ENCODE measurements at regions of chr4 and their contacts with region 1.

Region 1: DNA sequence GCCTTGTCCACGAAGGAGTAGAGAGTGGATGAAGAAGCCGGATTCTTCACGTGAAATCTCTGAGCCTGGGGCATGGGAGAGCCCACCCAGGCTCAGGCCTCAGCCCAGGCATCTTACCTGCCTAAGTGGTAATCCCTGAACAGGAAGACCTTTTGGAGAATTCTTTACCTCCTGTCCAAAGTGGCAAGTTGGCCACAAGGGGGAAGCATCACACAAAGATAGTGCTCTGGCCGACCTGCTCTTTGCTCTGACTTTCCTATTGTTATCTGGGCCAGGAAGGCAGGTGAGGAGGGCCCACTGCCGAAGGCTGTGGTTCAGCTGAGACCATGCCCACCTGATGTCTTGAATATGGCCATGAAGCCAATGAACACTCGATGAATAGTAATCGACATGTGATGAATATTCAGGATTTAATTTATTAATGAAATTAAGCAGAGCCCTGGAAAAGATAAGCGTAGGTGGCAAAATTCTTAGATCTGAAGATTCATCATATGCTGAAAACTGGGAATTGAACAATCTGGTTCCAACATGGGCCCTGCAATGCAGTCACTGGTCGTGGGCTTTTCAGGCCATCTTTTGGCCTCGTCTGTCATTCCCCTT is 93.8 kb downstream of the PDGFRA start:
- DNase-seq: peak; percentile 35 to 59
- ATAC-seq: peak; percentile 72 to 80 (median 75)
- H3K4me3 ChIP-seq: no peak overlapping the region
- H3K27ac ChIP-seq: no peak overlapping the region
- H3K4me1 ChIP-seq: no peaks in the 10 kb centered on the region
- H3K27me3 ChIP-seq: no peaks in the 10 kb centered on the region
- CTCF ChIP-seq: peak; percentile 75

Region 2: DNA sequence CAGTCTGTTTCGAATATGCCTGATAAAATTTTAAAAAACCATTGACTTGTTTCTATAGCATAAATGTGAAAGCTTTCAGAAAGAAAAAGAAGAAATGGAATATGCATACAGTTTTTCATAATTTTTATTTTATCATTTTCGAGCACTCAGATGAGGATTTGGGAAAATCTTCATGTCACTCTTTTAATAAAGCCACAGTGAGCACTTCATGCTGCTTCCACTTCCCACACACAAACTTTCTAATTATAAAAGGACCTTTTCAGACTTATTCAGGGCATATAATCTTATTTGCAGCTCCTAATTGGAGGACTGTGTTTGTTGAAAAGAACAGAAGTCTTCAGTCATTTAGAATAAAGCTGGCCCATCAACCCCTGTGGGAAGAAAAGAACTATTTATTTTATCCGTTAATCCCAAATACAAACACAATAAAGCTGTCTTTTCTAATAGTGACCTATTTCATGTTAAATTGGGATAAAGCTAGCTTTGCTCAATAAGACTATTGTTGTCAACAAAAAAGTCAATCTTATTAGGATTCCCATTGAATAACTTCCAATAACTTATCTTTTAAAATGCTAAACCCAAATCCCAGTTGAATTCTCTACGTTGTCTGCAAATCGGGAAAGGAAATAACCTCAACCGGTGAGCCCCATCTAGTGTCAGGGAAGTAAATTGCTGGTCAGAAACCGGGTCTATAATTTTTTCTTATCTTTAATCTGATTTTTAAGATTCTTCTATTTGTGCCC is 117.6 kb after region 1 on chr4:
- intact Hi-C with region 1: loop called (anchors 2 kb)
- DNase-seq: no peak
- ATAC-seq: peak in 3 of 4 donors; percentile 62 to 88 (median 73)
- H3K4me3 ChIP-seq: peak overlapping the region; percentile 56
- H3K27ac ChIP-seq: no peak overlapping the region
- H3K4me1 ChIP-seq: peaks cover 7% of the 10 kb centered on the region
- H3K27me3 ChIP-seq: no peaks in the 10 kb centered on the region
- CTCF ChIP-seq: peak; percentile 71

Region 3: GRCh38 chr4:54961357-54961975 is 638.5 kb after region 1 on chr4:
- intact Hi-C with region 1: loop called in 1 of 2 experiments (anchors 5 kb)
- DNase-seq: no peak
- ATAC-seq: no peak
- H3K4me3 ChIP-seq: no peak overlapping the region
- H3K27ac ChIP-seq: no peak overlapping the region
- H3K4me1 ChIP-seq: no peaks in the 10 kb centered on the region
- H3K27me3 ChIP-seq: no peaks in the 10 kb centered on the region
- CTCF ChIP-seq: peak; percentile 45

Measured in psoas muscle (tissue), 8 donors.